ENCODE measurements at regions of chr3 and their contacts with region 1.

Region 1: GRCh38 chr3:137013955-137014688 is 56.3 kb downstream of the IL20RB start:
- DNase-seq: peak; percentile 86 to 93
- ATAC-seq: peak; percentile 92 to 99 (median 96)
- H3K4me3 ChIP-seq: peak overlapping the region; percentile 57
- H3K27ac ChIP-seq: peak overlapping the region; percentile 30
- H3K4me1 ChIP-seq: no peaks in the 10 kb centered on the region
- H3K27me3 ChIP-seq: no peaks in the 10 kb centered on the region
- CTCF ChIP-seq: peak; percentile 92

Region 2: GRCh38 chr3:136075218-136075808 is 938.8 kb before region 1 on chr3:
- intact Hi-C with region 1: loop called (anchors 5 kb)
- DNase-seq: peak; percentile 57 to 69
- ATAC-seq: peak; percentile 84 to 88 (median 85)
- H3K4me3 ChIP-seq: peak overlapping the region; percentile 13
- H3K27ac ChIP-seq: peak overlapping the region; percentile 88
- H3K4me1 ChIP-seq: peaks cover 45% of the 10 kb centered on the region
- H3K27me3 ChIP-seq: no peaks in the 10 kb centered on the region
- CTCF ChIP-seq: peak; percentile 95

Region 3: GRCh38 chr3:136390574-136390973 is 623.5 kb before region 1 on chr3:
- intact Hi-C with region 1: loop called (anchors 5 kb)
- DNase-seq: no peak
- ATAC-seq: no peak
- H3K4me3 ChIP-seq: no peak overlapping the region
- H3K27ac ChIP-seq: no peak overlapping the region
- H3K4me1 ChIP-seq: no peaks in the 10 kb centered on the region
- H3K27me3 ChIP-seq: no peaks in the 10 kb centered on the region
- CTCF ChIP-seq: no peak

Region 4: DNA sequence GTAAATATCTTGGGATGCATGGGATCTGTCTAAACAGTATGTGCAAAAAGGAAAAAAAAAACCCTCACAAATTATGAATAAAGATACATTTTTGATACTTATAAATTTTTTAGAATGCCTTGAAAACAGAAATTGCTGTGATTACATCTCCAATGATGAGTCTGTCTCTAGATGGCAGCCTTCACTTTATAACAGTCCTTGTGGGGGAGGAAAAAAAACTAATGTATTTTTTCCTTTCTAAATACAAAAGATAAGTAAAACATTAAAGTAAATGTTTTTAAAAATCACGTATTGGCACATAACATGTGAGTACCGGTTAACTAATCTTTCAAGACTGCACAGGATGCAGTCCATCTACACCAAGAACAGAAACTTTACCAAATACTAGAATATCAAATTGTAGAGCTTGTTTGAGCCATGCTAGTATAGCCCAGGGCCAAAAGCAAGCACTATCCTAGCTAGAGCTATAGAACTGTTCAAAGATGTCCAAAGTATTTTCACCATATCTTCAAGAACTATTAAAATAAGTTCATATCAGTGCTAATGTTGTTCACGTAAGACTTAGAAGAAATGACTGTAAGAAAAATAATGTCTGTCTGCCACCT is 468.4 kb before region 1 on chr3:
- intact Hi-C with region 1: loop called in 1 of 2 experiments (anchors 10 kb)
- DNase-seq: no peak
- ATAC-seq: no peak
- H3K4me3 ChIP-seq: no peak overlapping the region
- H3K27ac ChIP-seq: no peak overlapping the region
- H3K4me1 ChIP-seq: no peaks in the 10 kb centered on the region
- H3K27me3 ChIP-seq: no peaks in the 10 kb centered on the region
- CTCF ChIP-seq: peak; percentile 25

Region 5: DNA sequence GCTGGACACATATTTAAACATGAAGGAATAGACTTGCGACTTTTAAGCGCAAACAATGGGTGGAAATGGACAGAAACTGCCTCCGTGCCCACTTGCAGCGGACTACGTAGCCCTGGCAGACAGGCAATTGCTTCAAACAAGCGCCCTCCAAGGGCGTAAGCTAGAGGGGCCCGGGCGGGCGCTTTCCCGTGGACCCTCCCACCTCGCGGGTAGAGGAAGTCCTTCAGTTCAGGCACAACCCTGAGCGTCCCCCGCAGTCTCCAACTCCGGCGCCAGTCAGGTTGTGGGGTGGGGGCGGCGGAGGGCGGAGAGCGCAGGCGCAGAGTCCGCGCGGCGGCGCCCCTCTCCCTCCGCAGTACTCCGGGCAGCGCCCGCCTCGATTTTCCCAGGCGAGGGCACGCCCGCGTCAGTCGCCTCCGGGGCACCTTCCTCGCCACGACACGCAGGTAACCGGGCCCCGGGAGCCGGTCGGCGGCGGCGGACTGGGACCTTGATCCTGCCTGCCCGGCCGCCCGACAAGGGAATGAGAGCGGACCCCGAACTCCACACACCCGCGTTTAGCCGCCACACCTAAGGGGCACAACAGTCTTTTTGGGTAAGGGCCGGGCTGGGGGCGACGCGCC is 195.2 kb before region 1 on chr3 and contains the start of gene SLC35G2:
- intact Hi-C with region 1: loop called in 1 of 2 experiments (anchors 1 kb)
- DNase-seq: peak; percentile 54 to 64
- ATAC-seq: peak; percentile 61 to 77 (median 72)
- H3K4me3 ChIP-seq: peak within 1 kb of the TSS; percentile 86
- H3K27ac ChIP-seq: peak within 1 kb of the TSS; percentile 64
- H3K4me1 ChIP-seq: peaks cover 6% of the 10 kb centered on the region
- H3K27me3 ChIP-seq: peaks cover 0 to 29% (median 2%) of the 10 kb centered on the region in 3 donors
- CTCF ChIP-seq: no peak
- total RNA-seq, gene SLC35G2: 0.69 to 2.5 (median 1.8) TPM

Region 6: GRCh38 chr3:136861890-136862616 is 152.1 kb before region 1 on chr3 and contains the start of gene NCK1:
- intact Hi-C with region 1: loop called in 1 of 2 experiments (anchors 10 kb)
- DNase-seq: peak; percentile 99
- ATAC-seq: peak; percentile 97 to 99 (median 98)
- H3K4me3 ChIP-seq: peak within 1 kb of the TSS; percentile 92
- H3K27ac ChIP-seq: peak within 1 kb of the TSS; percentile 97
- H3K4me1 ChIP-seq: peaks cover 16% of the 10 kb centered on the region
- H3K27me3 ChIP-seq: no peaks in the 10 kb centered on the region
- CTCF ChIP-seq: peak; percentile 6
- total RNA-seq, gene NCK1: 25.4 to 33.4 (median 30.7) TPM